Caco-2 (cell line): ENCODE measurements at regions of chr19 and their contacts with region 1.

Region 1: DNA sequence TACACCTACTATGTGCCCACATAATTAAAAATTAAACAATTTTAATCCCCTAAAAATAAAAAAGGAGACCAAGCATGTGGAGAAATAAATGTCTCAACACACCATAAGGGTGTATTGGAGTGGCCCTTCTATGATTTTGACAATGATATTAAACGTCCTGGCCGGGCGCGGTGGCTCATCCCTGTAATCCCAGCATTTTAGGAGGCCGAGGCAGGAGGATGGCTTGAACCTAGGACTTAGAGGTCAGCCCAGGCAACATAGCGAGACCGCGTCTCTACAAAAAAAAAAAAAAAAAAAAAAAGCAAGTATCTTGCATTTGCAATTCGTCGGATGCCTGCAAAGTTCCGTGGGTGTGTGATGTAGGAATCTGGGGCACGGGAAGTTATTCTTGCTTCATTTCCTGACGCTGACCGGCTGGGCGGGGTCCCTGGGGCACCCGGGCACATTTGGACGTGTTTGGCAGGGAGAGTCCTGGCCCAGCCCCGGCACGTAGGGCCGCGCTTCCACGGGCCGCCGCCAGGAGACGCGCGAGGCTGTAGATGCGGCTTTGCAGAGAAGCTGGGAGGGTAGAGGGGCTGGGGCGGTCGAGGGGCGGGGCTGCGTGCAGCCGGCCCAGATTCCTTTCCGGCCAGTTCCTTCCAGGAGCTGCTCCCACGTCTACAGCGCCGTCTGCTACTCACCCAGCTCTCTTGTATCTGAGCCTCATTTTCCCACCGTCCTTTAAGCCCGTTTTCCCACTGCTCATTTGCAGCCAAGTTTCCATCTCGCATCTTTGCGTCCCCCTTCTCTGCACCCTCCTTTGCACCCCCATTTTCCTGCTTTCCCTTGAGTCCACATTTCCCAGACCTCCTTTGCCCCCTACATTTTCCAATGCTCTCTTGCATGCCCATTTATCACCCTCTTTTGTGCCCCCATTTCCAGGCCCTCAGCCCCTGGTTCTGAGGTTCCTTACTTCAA is 2.2 kb upstream of the TSPAN16 start:
- DNase-seq: peak; percentile 92 to 97
- H3K4me3 ChIP-seq: peak overlapping the region; percentile 29
- H3K4me3 Mint-ChIP-seq: peak overlapping the region; percentile 66
- H3K27ac Mint-ChIP-seq: peak overlapping the region; percentile 58
- H3K4me1 ChIP-seq: no peaks in the 10 kb centered on the region
- H3K4me1 Mint-ChIP-seq: peaks cover 14% of the 10 kb centered on the region
- H3K27me3 ChIP-seq: no peaks in the 10 kb centered on the region
- H3K27me3 Mint-ChIP-seq: no peaks in the 10 kb centered on the region
- CTCF ChIP-seq: peak; percentile 96 to 99

Region 2: GRCh38 chr19:11227201-11227886 is 66.4 kb before region 1 on chr19:
- CTCF ChIA-PET with region 1: no interaction called
- POLR2A ChIA-PET with region 1: no interaction called
- intact Hi-C with region 1: no loop called
- DNase-seq: peak; percentile 47 to 71
- H3K4me3 ChIP-seq: no peak overlapping the region
- H3K4me3 Mint-ChIP-seq: no peak overlapping the region
- H3K27ac Mint-ChIP-seq: no peak overlapping the region
- H3K4me1 ChIP-seq: no peaks in the 10 kb centered on the region
- H3K4me1 Mint-ChIP-seq: no peaks in the 10 kb centered on the region
- H3K27me3 ChIP-seq: no peaks in the 10 kb centered on the region
- H3K27me3 Mint-ChIP-seq: no peaks in the 10 kb centered on the region
- CTCF ChIP-seq: no peak

Region 3: DNA sequence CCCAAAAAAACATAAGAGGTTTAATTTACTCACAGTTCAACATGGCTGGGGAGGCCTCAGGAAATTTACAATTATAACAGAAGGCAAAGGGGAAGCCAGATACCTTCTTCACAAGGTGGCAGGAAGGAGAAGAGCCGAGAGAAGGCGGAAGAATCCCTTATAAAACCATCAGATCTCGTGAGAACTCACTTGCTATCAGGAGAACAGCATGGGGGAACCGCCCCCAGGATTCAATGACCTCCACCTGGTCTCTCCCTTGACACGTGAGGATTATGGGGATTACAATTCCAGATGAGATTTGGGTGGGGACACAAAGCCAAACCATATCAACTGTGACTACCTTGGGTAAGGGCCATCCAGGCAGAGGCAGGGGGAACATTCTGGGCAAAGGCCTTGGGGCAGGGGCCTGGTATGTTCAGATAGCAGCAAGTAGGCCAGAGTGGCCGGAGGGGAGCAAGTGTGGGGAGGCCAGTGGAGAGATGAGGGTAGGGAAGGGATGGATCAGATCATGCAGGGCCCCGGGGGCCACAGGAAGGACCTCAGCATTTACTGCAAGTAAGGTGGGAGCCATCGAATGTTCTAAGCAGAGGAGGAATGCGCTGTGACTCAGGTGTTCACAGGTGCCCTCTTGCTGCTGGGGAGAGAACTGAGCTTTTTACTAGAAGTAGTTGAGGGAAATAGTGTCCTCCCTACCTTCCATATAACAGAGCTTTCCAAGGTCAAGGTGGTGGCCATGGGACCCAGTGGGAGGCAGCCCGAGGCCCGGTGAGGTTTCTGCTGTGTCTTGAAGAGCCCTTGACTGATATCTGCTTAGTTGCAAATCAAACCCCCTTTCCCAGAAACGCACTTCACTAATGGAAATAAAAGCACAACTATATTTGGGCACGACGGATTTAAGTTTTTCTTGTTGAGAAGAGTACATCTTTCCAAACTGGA is 27.7 kb after region 1 on chr19:
- CTCF ChIA-PET with region 1: interaction called, 25 read pairs
- POLR2A ChIA-PET with region 1: no interaction called
- intact Hi-C with region 1: no loop called
- DNase-seq: no peak
- H3K4me3 ChIP-seq: no peak overlapping the region
- H3K4me3 Mint-ChIP-seq: peak overlapping the region; percentile 25
- H3K27ac Mint-ChIP-seq: peak overlapping the region; percentile 36
- H3K4me1 ChIP-seq: peaks cover 7% of the 10 kb centered on the region; the same call in 1 of the 2 replicates
- H3K4me1 Mint-ChIP-seq: peaks cover 24% of the 10 kb centered on the region
- H3K27me3 ChIP-seq: no peaks in the 10 kb centered on the region
- H3K27me3 Mint-ChIP-seq: no peaks in the 10 kb centered on the region
- CTCF ChIP-seq: no peak

Region 4: DNA sequence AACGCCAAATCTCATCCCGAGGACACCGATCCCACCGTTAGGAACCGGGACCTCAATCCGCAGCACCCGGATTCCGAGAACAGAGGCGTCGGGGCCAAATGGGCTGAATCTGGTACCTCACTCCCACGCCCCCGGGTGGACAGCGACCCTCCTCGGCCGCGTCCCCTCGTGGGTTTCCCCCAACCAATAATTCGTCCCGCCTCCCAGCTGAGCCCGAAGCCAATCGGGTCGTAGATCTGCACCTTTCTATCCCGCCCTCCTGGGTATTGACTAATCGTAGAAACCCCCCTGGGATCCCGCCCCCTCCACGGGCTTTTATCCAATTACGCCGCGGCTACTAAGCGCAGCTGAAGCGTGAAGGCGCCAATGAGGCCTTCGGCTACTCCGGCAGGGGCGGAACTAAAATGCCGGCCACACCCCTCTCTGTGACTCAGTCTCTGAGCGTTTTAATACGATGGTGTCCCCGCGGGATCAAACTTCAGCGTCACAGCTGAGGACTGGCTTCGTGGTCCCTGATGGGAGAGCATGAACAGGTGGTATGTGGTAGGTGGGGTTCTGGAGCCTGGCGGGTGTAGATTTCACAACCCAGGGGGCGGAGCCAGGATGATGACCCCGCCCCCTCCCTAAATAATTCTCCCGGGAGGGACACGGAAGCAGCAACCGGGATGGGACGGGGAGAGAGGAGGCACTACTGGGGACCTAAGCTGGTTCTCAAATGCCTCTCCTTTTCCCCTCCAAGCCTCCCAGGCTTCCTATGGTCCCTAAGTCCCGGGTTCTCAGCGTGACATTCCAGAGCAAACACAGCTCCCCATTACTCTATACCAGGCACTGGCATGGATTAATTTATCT is 52.6 kb after region 1 on chr19 and contains the starts of genes CCDC159 and TMEM205:
- CTCF ChIA-PET with region 1: interaction called, 13 read pairs
- POLR2A ChIA-PET with region 1: interaction called, 6 read pairs
- intact Hi-C with region 1: loop called (anchors 1 kb)
- DNase-seq: peak; percentile 97 to 98
- H3K4me3 ChIP-seq: peak within 1 kb of the TSS; percentile 47
- H3K4me3 Mint-ChIP-seq: peak within 1 kb of the TSS; percentile 94
- H3K27ac Mint-ChIP-seq: peak within 1 kb of the TSS; percentile 92
- H3K4me1 ChIP-seq: peaks cover 17% of the 10 kb centered on the region
- H3K4me1 Mint-ChIP-seq: peaks cover 29% of the 10 kb centered on the region
- H3K27me3 ChIP-seq: no peaks in the 10 kb centered on the region
- H3K27me3 Mint-ChIP-seq: no peaks in the 10 kb centered on the region
- CTCF ChIP-seq: peak in 1 of 2 experiments; percentile 1
- total RNA-seq, gene CCDC159: 11.7 and 13.9 TPM in 2 replicates
- total RNA-seq, gene TMEM205: 68.3 and 76.1 TPM in 2 replicates

Region 5: GRCh38 chr19:11380653-11381534 is 87.2 kb after region 1 on chr19:
- CTCF ChIA-PET with region 1: interaction called, 30 read pairs
- POLR2A ChIA-PET with region 1: interaction called, 5 read pairs
- intact Hi-C with region 1: loop called (anchors 2 kb)
- DNase-seq: peak; percentile 99
- H3K4me3 ChIP-seq: peak overlapping the region; percentile 58
- H3K4me3 Mint-ChIP-seq: peak overlapping the region; percentile 95
- H3K27ac Mint-ChIP-seq: peak overlapping the region; percentile 98
- H3K4me1 ChIP-seq: 0 out of 2 replicates have a peak, but pooled peaks cover 4% of the 10 kb centered on the region
- H3K4me1 Mint-ChIP-seq: no peaks in the 10 kb centered on the region
- H3K27me3 ChIP-seq: no peaks in the 10 kb centered on the region
- H3K27me3 Mint-ChIP-seq: no peaks in the 10 kb centered on the region
- CTCF ChIP-seq: peak; percentile 68 to 70

Region 6: GRCh38 chr19:11482384-11483050 is 188.8 kb after region 1 on chr19:
- CTCF ChIA-PET with region 1: interaction called, 3 read pairs
- POLR2A ChIA-PET with region 1: no interaction called
- intact Hi-C with region 1: loop called (anchors 1 kb)
- DNase-seq: peak; percentile 78 to 88
- H3K4me3 ChIP-seq: peak overlapping the region; percentile 45
- H3K4me3 Mint-ChIP-seq: peak overlapping the region; percentile 71
- H3K27ac Mint-ChIP-seq: peak overlapping the region; percentile 19
- H3K4me1 ChIP-seq: peaks cover 16% of the 10 kb centered on the region
- H3K4me1 Mint-ChIP-seq: no peaks in the 10 kb centered on the region
- H3K27me3 ChIP-seq: no peaks in the 10 kb centered on the region; the same call in 1 of the 2 replicates
- H3K27me3 Mint-ChIP-seq: peaks cover 9% of the 10 kb centered on the region
- CTCF ChIP-seq: peak; percentile 81 to 91